Calu3 (cell line): ENCODE measurements at regions of chr1 and their contacts with region 1.

Region 1: DNA sequence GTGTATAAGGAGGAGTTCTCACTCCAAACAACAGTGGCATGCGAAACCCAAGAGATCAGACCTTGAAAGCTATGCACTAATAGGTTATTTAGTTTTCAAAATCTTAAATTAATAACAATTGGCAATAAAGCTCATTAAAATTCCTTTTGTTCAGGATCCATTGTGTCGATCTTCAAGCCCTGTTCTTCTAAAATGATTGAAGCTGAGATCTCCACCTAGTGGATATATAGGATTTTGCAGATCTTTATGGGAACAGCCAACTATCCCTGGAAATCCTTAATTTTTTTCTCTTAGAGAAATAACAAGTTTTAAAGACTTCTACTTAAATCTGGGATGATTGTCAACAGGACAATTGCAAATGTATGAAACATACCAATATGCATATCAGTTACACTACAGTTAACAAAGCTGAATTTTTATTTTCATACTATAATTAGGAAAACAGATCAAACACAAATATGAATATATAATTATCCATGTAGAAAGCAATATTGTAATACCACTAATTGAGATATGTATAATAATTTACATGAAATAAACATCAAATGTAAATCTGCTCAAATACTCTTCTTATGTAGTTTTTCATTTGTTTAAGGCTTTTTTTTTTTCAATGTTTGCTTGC is 43.3 kb downstream of the LRRC53 start:
- DNase-seq: no peak
- H3K4me3 Mint-ChIP-seq: no peak overlapping the region
- H3K27ac Mint-ChIP-seq: no peak overlapping the region
- H3K4me1 Mint-ChIP-seq: no peaks in the 10 kb centered on the region
- H3K27me3 Mint-ChIP-seq: no peaks in the 10 kb centered on the region
- CTCF ChIP-seq: no peak

Region 2: DNA sequence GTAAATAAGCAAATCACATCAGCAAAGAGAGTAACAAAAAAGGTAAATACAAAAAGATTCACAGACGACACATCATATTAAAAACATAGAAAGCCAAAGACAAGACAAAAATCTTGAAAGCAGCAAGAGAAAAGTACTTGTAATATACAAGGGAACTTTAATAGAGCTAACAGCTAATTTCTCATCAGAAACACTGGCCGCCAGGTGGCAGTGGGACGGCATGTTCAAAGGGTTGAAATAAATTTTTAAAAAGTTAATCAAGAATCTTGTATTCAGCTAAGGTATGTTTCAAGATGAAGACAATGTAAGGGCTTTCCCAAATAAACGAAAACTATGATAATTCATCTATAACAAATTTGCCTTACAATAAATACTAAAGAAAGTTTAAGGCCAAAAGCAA is 629.2 kb before region 1 on chr1:
- CTCF ChIA-PET with region 1: interaction called, 4 read pairs
- intact Hi-C with region 1: loop called (anchors 2 kb)
- DNase-seq: peak; percentile 62
- H3K4me3 Mint-ChIP-seq: no peak overlapping the region
- H3K27ac Mint-ChIP-seq: no peak overlapping the region
- H3K4me1 Mint-ChIP-seq: no peaks in the 10 kb centered on the region
- H3K27me3 Mint-ChIP-seq: no peaks in the 10 kb centered on the region
- CTCF ChIP-seq: peak; percentile 60

Region 3: GRCh38 chr1:74005533-74005932 is 463.6 kb before region 1 on chr1:
- CTCF ChIA-PET with region 1: no interaction called
- intact Hi-C with region 1: loop called (anchors 5 kb)
- DNase-seq: no peak
- H3K4me3 Mint-ChIP-seq: peak overlapping the region; percentile 33
- H3K27ac Mint-ChIP-seq: peak overlapping the region; percentile 30
- H3K4me1 Mint-ChIP-seq: peaks cover 20% of the 10 kb centered on the region
- H3K27me3 Mint-ChIP-seq: no peaks in the 10 kb centered on the region
- CTCF ChIP-seq: no peak

Region 4: GRCh38 chr1:74197657-74198552 is 271.2 kb before region 1 on chr1 and contains the starts of genes FPGT and LRRIQ3:
- CTCF ChIA-PET with region 1: no interaction called
- intact Hi-C with region 1: loop called (anchors 10 kb)
- DNase-seq: peak; percentile 96
- H3K4me3 Mint-ChIP-seq: peak within 1 kb of the TSS; percentile 92
- H3K27ac Mint-ChIP-seq: peak within 1 kb of the TSS; percentile 88
- H3K4me1 Mint-ChIP-seq: no peaks in the 10 kb centered on the region
- H3K27me3 Mint-ChIP-seq: no peaks in the 10 kb centered on the region
- CTCF ChIP-seq: no peak
- total RNA-seq, gene FPGT: 16.1 and 19.1 TPM in 2 replicates
- total RNA-seq, gene LRRIQ3: 0.52 and 0.66 TPM in 2 replicates

Region 5: GRCh38 chr1:74422421-74423292 is 46.4 kb before region 1 on chr1:
- CTCF ChIA-PET with region 1: no interaction called
- intact Hi-C with region 1: no loop called
- DNase-seq: no peak
- H3K4me3 Mint-ChIP-seq: no peak overlapping the region
- H3K27ac Mint-ChIP-seq: no peak overlapping the region
- H3K4me1 Mint-ChIP-seq: no peaks in the 10 kb centered on the region
- H3K27me3 Mint-ChIP-seq: no peaks in the 10 kb centered on the region
- CTCF ChIP-seq: no peak